Activated T-helper 2 cell treated with anti-CD3 and anti-CD28 coated beads, Interferon-gamma antibody, Interleukin-2, Interleukin-4, amounts not matched to agents 10 μg/mL and 5 μg/mL and 100 μg/mL, durations not matched to agents 14 hours and 24 hours and 36 hours (primary cell): ENCODE measurements at regions of chr1 and their contacts with region 1.

Region 1: GRCh38 chr1:65419681-65420589 is 533 bp upstream of the LEPR start:
- DNase-seq: peak; percentile 98
- H3K4me3 Mint-ChIP-seq: no peak overlapping the region
- H3K27ac Mint-ChIP-seq: peak overlapping the region; percentile 89
- H3K4me1 Mint-ChIP-seq: peaks cover 19% of the 10 kb centered on the region
- H3K27me3 Mint-ChIP-seq: peaks cover 19% of the 10 kb centered on the region

Region 2: GRCh38 chr1:64966158-64966971 is 453.6 kb before region 1 on chr1 and contains the start of gene JAK1:
- intact Hi-C with region 1: loop called (anchors 5 kb)
- DNase-seq: peak; percentile 81
- H3K4me3 Mint-ChIP-seq: peak within 1 kb of the TSS; percentile 89
- H3K27ac Mint-ChIP-seq: peak within 1 kb of the TSS; percentile 80
- H3K4me1 Mint-ChIP-seq: peaks cover 50% of the 10 kb centered on the region
- H3K27me3 Mint-ChIP-seq: no peaks in the 10 kb centered on the region
- total RNA-seq, gene JAK1: 99.9 and 105 TPM in 2 replicates

Region 3: GRCh38 chr1:65148548-65149350 is 271.2 kb before region 1 on chr1:
- intact Hi-C with region 1: loop called (anchors 1 kb)
- DNase-seq: peak; percentile 43
- H3K4me3 Mint-ChIP-seq: peak overlapping the region; percentile 90
- H3K27ac Mint-ChIP-seq: peak overlapping the region; percentile 88
- H3K4me1 Mint-ChIP-seq: peaks cover 40% of the 10 kb centered on the region
- H3K27me3 Mint-ChIP-seq: peaks cover 14% of the 10 kb centered on the region

Region 4: DNA sequence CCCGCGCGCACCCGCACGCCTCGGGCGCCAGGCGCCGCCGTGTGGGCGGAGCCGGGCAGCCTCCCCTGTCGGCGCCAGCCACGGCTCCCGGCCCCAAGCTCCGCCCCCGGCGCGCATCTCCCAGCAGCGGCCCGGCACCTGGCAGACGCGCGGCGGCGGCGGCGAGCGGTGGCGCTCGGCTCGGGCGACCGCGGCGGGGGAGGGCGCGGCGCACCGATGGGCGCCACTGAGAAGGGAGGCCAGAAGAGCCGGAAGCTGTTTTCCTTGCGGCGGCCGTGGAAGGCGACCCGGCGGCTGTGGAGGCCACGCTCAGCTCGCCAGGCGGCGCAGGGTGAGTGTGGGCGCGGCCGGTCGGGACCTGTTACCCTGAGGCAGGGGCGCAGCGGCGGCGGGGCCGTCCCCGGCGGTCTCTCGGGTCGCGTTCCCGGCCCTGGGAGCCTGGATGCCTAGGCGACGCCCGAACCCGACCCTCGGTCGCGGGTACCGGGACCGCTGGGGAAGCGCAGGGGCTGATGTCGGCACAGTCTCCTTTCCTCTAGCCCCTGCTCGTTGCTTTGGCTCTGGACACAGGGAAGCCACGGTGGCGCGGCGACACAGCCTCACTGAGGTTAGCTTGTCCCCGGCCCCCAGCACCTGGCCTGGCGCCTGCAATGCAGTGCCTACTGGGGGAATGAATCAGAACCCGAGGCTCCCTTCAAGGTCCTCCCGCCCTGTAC is 165.5 kb before region 1 on chr1:
- intact Hi-C with region 1: loop called (anchors 5 kb)
- DNase-seq: peak; percentile 80
- H3K4me3 Mint-ChIP-seq: peak overlapping the region; percentile 85
- H3K27ac Mint-ChIP-seq: no peak overlapping the region
- H3K4me1 Mint-ChIP-seq: peaks cover 12% of the 10 kb centered on the region
- H3K27me3 Mint-ChIP-seq: peaks cover 39% of the 10 kb centered on the region

Region 5: GRCh38 chr1:66929999-66930822 is 1510.3 kb after region 1 on chr1:
- intact Hi-C with region 1: loop called (anchors 5 kb)
- DNase-seq: peak; percentile 93
- H3K4me3 Mint-ChIP-seq: peak overlapping the region; percentile 90
- H3K27ac Mint-ChIP-seq: peak overlapping the region; percentile 91
- H3K4me1 Mint-ChIP-seq: peaks cover 55% of the 10 kb centered on the region
- H3K27me3 Mint-ChIP-seq: no peaks in the 10 kb centered on the region